ENCODE measurements at regions of chr2 and their contacts with region 1.

Region 1: DNA sequence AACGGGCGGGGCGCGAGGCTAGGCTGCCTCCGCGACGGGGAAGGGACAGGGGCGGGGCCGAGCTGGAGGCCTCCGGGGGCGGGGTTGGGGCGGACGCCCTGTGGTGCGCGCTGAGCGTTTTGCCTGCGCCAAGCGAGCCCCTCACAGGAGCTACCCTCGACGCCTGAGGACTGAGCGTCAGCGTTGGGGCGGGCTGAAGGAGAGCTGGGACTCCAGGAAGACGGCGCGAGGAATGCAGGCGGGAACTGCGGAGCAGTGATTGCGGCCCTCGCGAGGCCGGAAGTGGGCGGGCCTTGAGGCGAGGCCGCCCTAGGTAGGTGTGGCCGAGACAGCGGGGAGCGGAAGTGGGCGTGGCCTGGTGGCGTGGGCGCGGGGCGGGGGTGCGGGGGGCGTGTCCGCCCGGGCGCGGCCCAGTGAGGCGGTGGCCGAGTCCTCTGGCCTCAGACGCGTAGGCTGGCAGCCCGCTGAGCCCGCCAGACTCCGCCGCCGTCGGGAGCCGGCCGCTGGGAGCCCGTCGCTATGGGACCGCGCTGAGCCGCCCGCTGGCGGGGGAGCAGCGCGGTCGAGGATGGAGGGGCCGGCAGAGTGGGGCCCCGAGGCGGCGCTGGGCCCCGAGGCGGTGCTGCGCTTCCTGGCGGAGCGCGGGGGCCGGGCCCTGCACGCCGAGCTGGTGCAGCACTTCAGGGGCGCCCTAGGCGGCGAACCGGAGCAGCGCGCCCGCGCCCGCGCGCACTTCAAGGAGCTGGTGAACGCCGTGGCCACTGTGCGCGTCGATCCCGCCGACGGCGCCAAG is at the starts of genes SEPTIN10 and SOWAHC:
- DNase-seq: peak; percentile 92
- ATAC-seq: peak; percentile 91
- H3K4me3 Mint-ChIP-seq: peak within 1 kb of the TSS; percentile 80
- H3K27ac Mint-ChIP-seq: peak within 1 kb of the TSS; percentile 37
- H3K4me1 Mint-ChIP-seq: peaks cover 16% of the 10 kb centered on the region
- H3K27me3 Mint-ChIP-seq: peaks cover 54% of the 10 kb centered on the region
- total RNA-seq, gene SEPTIN10: 5.8 to 6.3 TPM
- total RNA-seq, gene SOWAHC: 0.63 to 0.98 TPM

Region 2: DNA sequence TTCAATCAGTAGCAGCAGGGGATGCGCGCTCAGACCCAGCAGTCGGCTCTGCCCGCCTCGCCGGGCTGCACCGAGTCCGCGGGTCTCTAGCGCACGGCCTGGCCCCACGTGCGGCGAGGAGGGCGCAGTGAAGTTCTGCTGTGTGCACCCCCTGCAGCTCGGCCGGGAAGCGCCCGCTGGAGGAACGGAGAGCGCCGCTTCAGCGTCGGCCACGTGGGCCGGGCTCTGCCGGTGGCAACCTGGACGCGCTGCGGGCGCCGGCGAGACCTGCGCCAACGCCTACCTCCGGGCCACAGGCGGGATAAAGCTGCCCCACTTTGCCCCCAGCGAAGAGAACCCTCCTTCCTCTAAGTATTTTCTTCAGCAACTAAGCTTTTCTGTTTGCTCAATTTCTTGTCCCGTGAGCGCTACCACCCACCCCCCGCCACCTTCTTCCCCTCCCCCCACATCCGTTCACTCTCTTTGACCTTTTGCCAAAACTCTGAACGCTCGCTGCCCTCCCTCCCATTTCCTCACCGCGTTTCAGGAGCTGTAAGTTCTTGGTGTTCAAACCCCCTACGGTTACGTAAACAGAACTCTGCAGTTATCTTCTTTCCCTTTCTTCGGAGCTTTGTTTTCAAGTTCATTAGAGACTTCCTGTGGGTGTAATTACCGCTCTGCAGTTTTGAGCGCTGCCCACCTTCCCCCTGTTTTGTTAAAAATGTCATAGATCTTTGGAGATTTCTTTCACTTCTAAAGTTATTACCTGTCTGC is 582.5 kb before region 1 on chr2:
- CTCF ChIA-PET with region 1: no interaction called
- POLR2A ChIA-PET with region 1: no interaction called
- intact Hi-C with region 1: loop called in 1 of 2 experiments (anchors 5 kb)
- DNase-seq: peak; percentile 77
- ATAC-seq: peak; percentile 63
- H3K4me3 Mint-ChIP-seq: peak overlapping the region; percentile 71
- H3K27ac Mint-ChIP-seq: peak overlapping the region; percentile 86
- H3K4me1 Mint-ChIP-seq: peaks cover 61% of the 10 kb centered on the region
- H3K27me3 Mint-ChIP-seq: no peaks in the 10 kb centered on the region

Region 3: GRCh38 chr2:109582928-109583895 is 30.9 kb before region 1 on chr2:
- CTCF ChIA-PET with region 1: no interaction called
- POLR2A ChIA-PET with region 1: no interaction called
- intact Hi-C with region 1: no loop called
- DNase-seq: no peak
- ATAC-seq: no peak
- H3K4me3 Mint-ChIP-seq: no peak overlapping the region
- H3K27ac Mint-ChIP-seq: no peak overlapping the region
- H3K4me1 Mint-ChIP-seq: no peaks in the 10 kb centered on the region
- H3K27me3 Mint-ChIP-seq: peaks cover 8% of the 10 kb centered on the region

Region 4: DNA sequence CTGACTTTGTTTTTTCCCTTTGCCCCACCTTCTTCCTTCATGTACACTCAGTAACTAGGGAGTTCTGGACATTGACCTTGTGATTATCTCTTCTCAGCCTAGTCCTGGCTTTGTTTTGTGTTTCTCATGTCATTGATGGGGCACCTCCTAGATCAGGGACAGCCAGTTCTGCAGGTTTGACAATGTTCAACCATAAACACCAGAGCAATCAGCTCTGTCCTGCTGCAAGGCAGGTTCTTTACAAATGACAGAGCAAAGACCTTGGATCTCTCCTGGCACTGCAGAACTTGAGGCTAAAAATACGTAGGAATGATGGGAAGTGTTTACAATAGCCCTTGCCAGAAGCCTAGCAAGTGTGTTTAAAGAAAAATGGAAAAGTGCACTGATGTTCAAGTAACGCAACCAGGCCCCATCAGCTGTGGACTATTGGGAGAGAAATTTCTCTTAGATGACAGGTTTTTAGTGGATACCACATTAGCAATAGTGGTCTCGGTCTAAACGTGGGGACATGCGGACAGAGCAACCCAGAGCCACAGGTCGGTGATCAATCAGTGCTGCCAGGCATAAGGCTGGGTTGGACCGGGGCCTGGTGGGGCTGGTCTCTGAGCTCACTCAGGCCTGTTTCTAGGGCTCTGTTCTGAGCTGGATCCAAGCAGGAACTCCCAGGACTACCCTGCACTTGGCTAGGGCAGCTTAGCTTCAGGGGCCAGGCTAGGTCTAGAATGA is 76.9 kb after region 1 on chr2:
- CTCF ChIA-PET with region 1: no interaction called
- POLR2A ChIA-PET with region 1: no interaction called
- intact Hi-C with region 1: loop called in 1 of 2 experiments (anchors 1 kb)
- DNase-seq: no peak
- ATAC-seq: no peak
- H3K4me3 Mint-ChIP-seq: no peak overlapping the region
- H3K27ac Mint-ChIP-seq: no peak overlapping the region
- H3K4me1 Mint-ChIP-seq: peaks cover 8% of the 10 kb centered on the region
- H3K27me3 Mint-ChIP-seq: peaks cover 14% of the 10 kb centered on the region

Region 5: GRCh38 chr2:109736177-109736827 is 122.2 kb after region 1 on chr2:
- CTCF ChIA-PET with region 1: no interaction called
- POLR2A ChIA-PET with region 1: no interaction called
- intact Hi-C with region 1: loop called in 1 of 2 experiments (anchors 5 kb)
- DNase-seq: peak; percentile 42
- ATAC-seq: no peak
- H3K4me3 Mint-ChIP-seq: no peak overlapping the region
- H3K27ac Mint-ChIP-seq: no peak overlapping the region
- H3K4me1 Mint-ChIP-seq: no peaks in the 10 kb centered on the region
- H3K27me3 Mint-ChIP-seq: peaks cover 12% of the 10 kb centered on the region

Region 6: GRCh38 chr2:110204780-110205385 is 590.8 kb after region 1 on chr2 and contains the start of gene NPHP1:
- CTCF ChIA-PET with region 1: no interaction called
- POLR2A ChIA-PET with region 1: no interaction called
- intact Hi-C with region 1: loop called in 1 of 2 experiments (anchors 5 kb)
- DNase-seq: peak; percentile 89
- ATAC-seq: peak; percentile 89
- H3K4me3 Mint-ChIP-seq: peak within 1 kb of the TSS; percentile 79
- H3K27ac Mint-ChIP-seq: peak within 1 kb of the TSS; percentile 62
- H3K4me1 Mint-ChIP-seq: peaks cover 26% of the 10 kb centered on the region
- H3K27me3 Mint-ChIP-seq: no peaks in the 10 kb centered on the region
- total RNA-seq, gene NPHP1: 2.2 to 2.8 TPM